ENCODE measurements at regions of chr1 and their contacts with region 1.

Region 1: DNA sequence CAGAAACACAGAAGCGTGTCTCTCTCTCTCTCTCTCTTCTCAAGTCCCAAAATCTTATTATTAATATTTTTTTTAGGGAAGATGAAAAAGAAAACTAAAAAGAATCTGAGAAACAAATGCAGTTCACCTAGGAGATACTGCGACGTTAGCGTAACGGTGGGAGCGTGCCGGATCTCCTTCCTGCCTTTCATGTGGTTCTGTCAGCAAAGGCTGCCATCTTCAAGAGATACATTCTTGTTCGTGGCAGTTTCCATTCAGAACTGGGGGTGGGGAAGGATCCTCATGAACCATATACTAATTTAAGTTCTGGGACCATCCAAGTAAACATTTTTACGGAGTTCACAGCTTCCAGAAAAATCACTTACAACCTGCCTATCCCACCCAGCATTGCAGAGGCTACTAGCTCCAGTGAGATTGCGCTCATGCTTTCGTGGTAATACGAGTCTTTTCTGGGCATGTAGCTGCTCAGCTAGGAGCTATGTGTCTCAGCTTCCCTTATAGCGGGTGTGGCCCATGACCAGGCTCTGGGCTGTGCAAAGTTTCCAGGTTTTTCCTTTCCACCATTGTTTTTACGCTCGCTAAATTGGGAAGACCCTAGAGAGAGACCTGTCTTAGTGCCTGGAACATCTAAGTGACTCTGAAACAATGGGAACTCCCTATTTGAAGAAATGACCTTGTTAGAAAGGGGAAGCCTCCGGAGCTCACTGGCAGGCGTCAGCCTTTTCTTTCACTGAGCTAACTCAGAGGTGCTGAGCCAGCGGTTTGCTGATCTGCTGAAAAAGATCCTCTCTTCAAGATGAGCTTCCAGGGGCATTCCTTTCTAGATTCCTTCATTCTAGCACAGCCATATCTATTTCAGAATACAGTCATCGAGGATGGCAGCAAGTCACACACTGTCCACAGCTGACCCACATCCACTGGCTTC is 17.3 kb downstream of the SLAMF1 start:
- DNase-seq: peak; percentile 90
- ATAC-seq: peak; percentile 30
- H3K4me3 Mint-ChIP-seq: peak overlapping the region; percentile 67
- H3K27ac Mint-ChIP-seq: peak overlapping the region; percentile 98
- H3K4me1 Mint-ChIP-seq: peaks cover 95% of the 10 kb centered on the region
- H3K27me3 Mint-ChIP-seq: no peaks in the 10 kb centered on the region
- CTCF ChIP-seq: no peak

Region 2: DNA sequence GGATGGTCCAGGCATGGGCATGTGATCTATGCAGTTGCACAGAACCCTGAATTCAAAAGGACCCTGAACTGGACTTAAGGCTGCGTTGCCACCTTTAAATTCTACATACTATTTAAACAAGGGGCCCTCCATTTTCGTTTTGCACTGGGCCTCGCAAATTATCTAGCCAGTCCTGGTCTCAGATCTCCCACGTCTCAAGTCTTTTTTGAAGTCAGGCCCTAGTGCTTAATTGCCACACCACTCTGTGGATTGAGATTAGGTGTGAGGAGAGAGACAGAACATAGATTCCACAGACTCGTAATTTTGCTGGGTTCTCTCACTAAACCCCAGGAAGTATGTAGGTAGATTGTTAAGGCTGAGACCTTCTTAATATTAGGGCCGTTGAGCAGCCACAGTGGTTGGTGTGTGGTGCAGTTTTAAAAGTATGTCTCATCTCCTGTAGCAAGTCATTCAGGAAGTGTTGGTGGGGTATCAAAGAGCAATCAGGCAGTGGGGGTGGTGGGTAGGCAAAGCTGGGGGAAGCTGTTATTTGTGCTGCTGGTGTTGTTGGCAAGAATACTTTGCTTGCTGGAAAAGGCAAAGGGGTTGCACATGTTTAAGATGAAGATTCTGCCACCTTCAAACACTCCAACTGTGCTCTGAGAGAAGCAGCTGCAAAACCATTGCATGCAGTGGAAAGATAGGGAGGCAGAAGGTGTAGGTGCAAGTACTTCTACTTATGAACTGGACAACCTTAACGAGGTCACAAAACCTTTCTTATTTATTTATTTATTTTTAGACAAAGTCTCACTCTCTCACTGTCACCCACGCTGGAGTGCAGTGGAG is 61.5 kb before region 1 on chr1:
- CTCF ChIA-PET with region 1: no interaction called
- POLR2A ChIA-PET with region 1: no interaction called
- intact Hi-C with region 1: no loop called
- DNase-seq: peak; percentile 92
- ATAC-seq: peak; percentile 94
- H3K4me3 Mint-ChIP-seq: peak overlapping the region; percentile 51
- H3K27ac Mint-ChIP-seq: peak overlapping the region; percentile 96
- H3K4me1 Mint-ChIP-seq: peaks cover 89% of the 10 kb centered on the region
- H3K27me3 Mint-ChIP-seq: no peaks in the 10 kb centered on the region
- CTCF ChIP-seq: no peak

Region 3: DNA sequence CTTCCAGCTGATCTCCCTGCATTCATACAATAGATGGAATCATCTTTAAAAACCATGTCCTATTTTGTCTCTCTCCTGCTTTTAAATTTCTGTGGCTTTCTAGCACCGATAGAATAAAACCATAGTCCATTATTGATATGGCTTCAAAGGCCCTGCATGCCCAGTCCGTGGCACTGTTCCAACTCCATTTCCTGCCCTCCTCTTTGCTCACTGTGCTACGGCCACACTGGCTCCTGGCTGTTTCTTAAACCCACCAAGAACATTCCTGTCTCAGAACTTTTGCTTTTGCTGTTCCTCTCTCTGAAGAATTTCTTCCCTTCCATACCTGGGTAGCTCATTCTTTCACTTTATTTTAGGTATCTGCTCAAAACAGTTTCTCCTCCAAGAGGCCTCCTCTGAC is 10.1 kb after region 1 on chr1:
- CTCF ChIA-PET with region 1: interaction called, 6 read pairs
- POLR2A ChIA-PET with region 1: interaction called, 38 read pairs
- intact Hi-C with region 1: loop called (anchors 2 kb)
- DNase-seq: no peak
- ATAC-seq: no peak
- H3K4me3 Mint-ChIP-seq: peak overlapping the region; percentile 74
- H3K27ac Mint-ChIP-seq: peak overlapping the region; percentile 98
- H3K4me1 Mint-ChIP-seq: peaks cover 80% of the 10 kb centered on the region
- H3K27me3 Mint-ChIP-seq: no peaks in the 10 kb centered on the region
- CTCF ChIP-seq: no peak

Region 4: DNA sequence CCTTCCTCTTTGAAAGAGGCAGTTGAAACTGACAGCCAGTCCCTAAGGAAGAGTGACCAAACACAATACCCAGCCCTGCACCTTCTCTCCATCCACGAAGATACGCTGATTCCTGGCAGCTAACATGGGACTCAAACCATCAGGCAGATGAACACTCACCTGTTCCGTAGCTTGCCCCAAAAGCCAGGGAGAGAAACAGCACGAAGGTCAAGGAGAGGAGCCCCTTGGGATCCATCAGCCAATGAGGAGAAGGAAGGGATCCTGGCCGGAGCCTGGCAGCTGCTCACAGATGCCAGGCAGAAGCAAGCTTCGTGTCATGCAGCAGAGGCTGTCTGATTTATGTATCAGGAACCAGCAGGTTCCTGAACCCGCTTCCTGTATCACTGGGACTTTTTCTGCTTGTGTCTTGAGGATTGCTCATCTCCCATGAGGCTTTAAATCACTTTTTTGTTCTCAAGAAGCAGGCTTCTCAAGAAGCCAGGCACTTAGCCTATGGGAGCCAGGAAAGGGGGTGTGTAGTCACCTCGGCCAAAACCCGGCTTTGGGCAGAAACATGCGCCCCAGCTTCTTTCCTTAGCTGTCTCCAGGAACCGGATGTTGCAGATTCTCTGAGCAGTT is 17.3 kb after region 1 on chr1 and contains the start of gene SLAMF1:
- CTCF ChIA-PET with region 1: interaction called, 4 read pairs
- POLR2A ChIA-PET with region 1: interaction called, 24 read pairs
- intact Hi-C with region 1: no loop called
- DNase-seq: peak; percentile 70
- ATAC-seq: peak; percentile 74
- H3K4me3 Mint-ChIP-seq: peak within 1 kb of the TSS; percentile 97
- H3K27ac Mint-ChIP-seq: peak within 1 kb of the TSS; percentile 99
- H3K4me1 Mint-ChIP-seq: peaks cover 49% of the 10 kb centered on the region
- H3K27me3 Mint-ChIP-seq: no peaks in the 10 kb centered on the region
- CTCF ChIP-seq: no peak
- total RNA-seq, gene SLAMF1: 65.9 to 67.8 TPM

Region 5: GRCh38 chr1:160675641-160676410 is 46.3 kb after region 1 on chr1:
- CTCF ChIA-PET with region 1: interaction called, 21 read pairs
- POLR2A ChIA-PET with region 1: interaction called, 19 read pairs
- intact Hi-C with region 1: loop called (anchors 5 kb)
- DNase-seq: peak; percentile 88
- ATAC-seq: peak; percentile 85
- H3K4me3 Mint-ChIP-seq: no peak overlapping the region
- H3K27ac Mint-ChIP-seq: peak overlapping the region; percentile 73
- H3K4me1 Mint-ChIP-seq: peaks cover 30% of the 10 kb centered on the region
- H3K27me3 Mint-ChIP-seq: no peaks in the 10 kb centered on the region
- CTCF ChIP-seq: peak; percentile 73

Region 6: GRCh38 chr1:160681067-160681890 is 51.7 kb after region 1 on chr1:
- CTCF ChIA-PET with region 1: interaction called, 21 read pairs
- POLR2A ChIA-PET with region 1: interaction called, 3 read pairs
- intact Hi-C with region 1: loop called (anchors 5 kb)
- DNase-seq: peak; percentile 96
- ATAC-seq: peak; percentile 74
- H3K4me3 Mint-ChIP-seq: no peak overlapping the region
- H3K27ac Mint-ChIP-seq: peak overlapping the region; percentile 95
- H3K4me1 Mint-ChIP-seq: peaks cover 67% of the 10 kb centered on the region
- H3K27me3 Mint-ChIP-seq: no peaks in the 10 kb centered on the region
- CTCF ChIP-seq: peak; percentile 97

Region 7: GRCh38 chr1:160711602-160712311 is 82.2 kb after region 1 on chr1 and contains the start of gene CD48:
- CTCF ChIA-PET with region 1: no interaction called
- POLR2A ChIA-PET with region 1: interaction called, 4 read pairs
- intact Hi-C with region 1: loop called (anchors 5 kb)
- DNase-seq: peak; percentile 75
- ATAC-seq: peak; percentile 37
- H3K4me3 Mint-ChIP-seq: no peak within 1 kb of the TSS
- H3K27ac Mint-ChIP-seq: no peak within 1 kb of the TSS
- H3K4me1 Mint-ChIP-seq: peaks cover 37% of the 10 kb centered on the region
- H3K27me3 Mint-ChIP-seq: no peaks in the 10 kb centered on the region
- CTCF ChIP-seq: no peak
- total RNA-seq, gene CD48: 379 to 388 TPM

Measured in activated CD8-positive, alpha-beta T cell treated with anti-CD3 and anti-CD28 coated beads for 36 hours (primary cell).